SK-N-SH (cell line): ENCODE measurements at regions of chr11 and their contacts with region 1.

Region 1: DNA sequence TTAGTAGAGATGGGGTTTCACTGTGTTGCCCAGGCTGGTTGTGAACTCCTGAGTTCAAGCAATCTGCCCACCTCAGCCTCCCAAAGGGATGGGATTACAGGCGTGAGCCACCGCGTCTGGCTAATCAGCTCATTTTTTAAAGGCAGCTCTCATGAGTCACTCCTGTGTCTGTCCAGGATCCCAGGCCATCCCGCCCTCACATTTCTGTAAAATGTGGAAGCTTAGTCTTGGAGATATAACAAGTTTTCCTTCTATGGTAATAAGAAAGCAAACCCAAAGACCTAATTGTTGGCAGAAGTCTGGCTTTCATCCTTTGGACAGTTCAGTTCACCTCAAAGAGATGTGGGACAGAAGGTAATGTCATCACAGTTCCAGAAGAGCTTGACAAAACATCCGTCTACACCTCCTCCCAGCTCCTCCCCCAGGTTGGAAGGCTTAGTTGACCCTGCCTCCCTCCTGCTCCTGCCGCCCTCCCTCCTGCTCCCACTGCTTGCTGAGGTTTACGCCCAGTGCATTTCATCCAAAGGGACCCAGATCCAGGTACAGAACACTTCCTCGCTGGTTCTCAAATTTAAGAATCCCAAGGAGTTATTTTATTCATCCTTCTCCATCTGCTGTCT is 6.4 kb downstream of the DRD2 start:
- DNase-seq: no peak
- H3K4me3 ChIP-seq: no peak overlapping the region
- H3K27ac ChIP-seq: no peak overlapping the region
- H3K4me1 ChIP-seq: peaks cover 0 to 20% of the 10 kb centered on the region in 2 experiments; a peak in 1 of 4 replicates
- H3K27me3 ChIP-seq: no peaks in the 10 kb centered on the region
- CTCF ChIP-seq: no peak
- EP300 ChIP-seq: no peak
- RAD21 ChIP-seq: no peak

Region 2: GRCh38 chr11:113457784-113458183 is 11.1 kb before region 1 on chr11:
- CTCF ChIA-PET with region 1: interaction called, 11 read pairs
- POLR2A ChIA-PET with region 1: no interaction called
- DNase-seq: peak; percentile 51
- H3K4me3 ChIP-seq: no peak overlapping the region
- H3K27ac ChIP-seq: peak overlapping the region in 1 of 2 experiments; percentile 72; a peak in 2 of 4 replicates
- H3K4me1 ChIP-seq: peaks cover 0 to 25% of the 10 kb centered on the region in 2 experiments; a peak in 2 of 4 replicates
- H3K27me3 ChIP-seq: no peaks in the 10 kb centered on the region
- CTCF ChIP-seq: no peak
- EP300 ChIP-seq: no peak
- RAD21 ChIP-seq: peak; percentile 27; the same call in 1 of the 2 replicates